Gastrocnemius medialis (tissue), 4 donors: ENCODE measurements at regions of chr4 and their contacts with region 1.

Region 1: GRCh38 chr4:94995684-94996394 is 238.1 kb downstream of the BMPR1B start:
- DNase-seq: peak; percentile 61 to 77
- ATAC-seq: peak; percentile 98 to 99
- H3K4me3 ChIP-seq: peak overlapping the region; percentile 47 to 57 (median 54)
- H3K27ac ChIP-seq: peak overlapping the region; percentile 83 to 88 (median 84)
- H3K4me1 ChIP-seq: peaks cover 20 to 28% of the 10 kb centered on the region in 2 donors
- H3K27me3 ChIP-seq: no peaks in the 10 kb centered on the region
- CTCF ChIP-seq: no peak
- POLR2A ChIP-seq: peak; percentile 43 to 63

Region 2: GRCh38 chr4:94207469-94208224 is 788.2 kb before region 1 on chr4 and contains the start of gene SMARCAD1:
- in situ Hi-C with region 1: no loop called
- intact Hi-C with region 1: loop called (anchors 5 kb)
- DNase-seq: peak; percentile 73 to 83
- ATAC-seq: peak; percentile 97 to 98
- H3K4me3 ChIP-seq: peak within 1 kb of the TSS; percentile 86 to 99 (median 96)
- H3K27ac ChIP-seq: peak within 1 kb of the TSS; percentile 88 to 98 (median 96)
- H3K4me1 ChIP-seq: peaks cover 23 to 27% of the 10 kb centered on the region in 2 donors
- H3K27me3 ChIP-seq: no peaks in the 10 kb centered on the region
- CTCF ChIP-seq: peak in 1 of 5 experiments; percentile 12
- POLR2A ChIP-seq: peak; percentile 21 to 29
- total RNA-seq, gene SMARCAD1: 5.7 to 16.9 (median 8.0) TPM

Region 3: GRCh38 chr4:95049551-95050233 is 53.9 kb after region 1 on chr4:
- in situ Hi-C with region 1: no loop called
- intact Hi-C with region 1: loop called (anchors 5 kb)
- DNase-seq: no peak
- ATAC-seq: peak in 1 of 2 donors; percentile 38
- H3K4me3 ChIP-seq: no peak overlapping the region
- H3K27ac ChIP-seq: no peak overlapping the region
- H3K4me1 ChIP-seq: peaks cover 17 to 18% of the 10 kb centered on the region in 2 donors
- H3K27me3 ChIP-seq: no peaks in the 10 kb centered on the region
- CTCF ChIP-seq: no peak
- POLR2A ChIP-seq: no peak

Region 4: DNA sequence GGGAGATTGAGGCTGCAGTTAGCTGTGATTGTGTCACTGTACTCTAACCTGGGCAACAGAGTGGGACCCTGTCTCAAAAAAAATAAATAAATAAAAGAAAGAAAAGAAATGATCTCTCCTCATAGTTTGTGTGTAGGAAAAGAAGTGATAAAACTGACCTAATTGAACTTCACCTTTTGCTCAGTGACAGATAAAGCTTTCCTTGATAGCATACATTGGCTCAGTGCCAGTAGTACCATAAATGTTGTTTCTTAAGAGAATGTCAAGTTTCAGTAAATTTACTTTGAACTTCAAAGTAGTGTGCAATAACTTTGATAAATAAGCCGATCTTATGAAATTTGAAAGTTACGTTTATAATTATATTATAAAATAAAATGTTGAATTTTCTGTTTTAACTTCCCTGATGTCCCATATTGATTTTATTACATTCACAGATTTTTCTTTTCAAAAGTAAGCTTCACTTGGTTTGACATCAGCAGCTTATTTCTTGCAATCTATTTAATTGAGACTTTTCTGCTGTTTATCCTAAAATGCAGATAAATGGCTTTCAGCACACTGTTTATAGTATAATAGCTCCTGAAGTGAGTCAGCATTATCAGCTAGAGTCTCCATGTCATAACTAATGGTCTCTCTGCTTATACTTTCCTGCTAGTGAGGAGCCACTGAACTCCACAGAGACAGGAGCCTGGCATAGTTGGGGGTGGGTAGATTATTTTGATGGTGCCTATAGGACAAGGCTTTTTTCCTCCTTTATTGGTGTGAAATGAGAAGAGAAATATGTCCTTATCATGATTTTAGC is 92.0 kb after region 1 on chr4:
- in situ Hi-C with region 1: no loop called
- intact Hi-C with region 1: loop called (anchors 2 kb)
- DNase-seq: no peak
- ATAC-seq: no peak
- H3K4me3 ChIP-seq: no peak overlapping the region
- H3K27ac ChIP-seq: no peak overlapping the region
- H3K4me1 ChIP-seq: peaks cover 9% of the 10 kb centered on the region in 2 donors
- H3K27me3 ChIP-seq: no peaks in the 10 kb centered on the region
- CTCF ChIP-seq: no peak
- POLR2A ChIP-seq: no peak